ENCODE measurements at regions of chr6 and their contacts with region 1.

Region 1: GRCh38 chr6:126657561-126658175 is 317.8 kb downstream of the CENPW start:
- DNase-seq: no peak
- ATAC-seq: peak in 3 of 4 donors; percentile 49 to 72 (median 50)
- H3K4me3 ChIP-seq: no peak overlapping the region
- H3K27ac ChIP-seq: no peak overlapping the region
- H3K4me1 ChIP-seq: no peaks in the 10 kb centered on the region
- H3K27me3 ChIP-seq: no peaks in the 10 kb centered on the region
- CTCF ChIP-seq: peak in 1 of 4 donors; percentile 18

Region 2: DNA sequence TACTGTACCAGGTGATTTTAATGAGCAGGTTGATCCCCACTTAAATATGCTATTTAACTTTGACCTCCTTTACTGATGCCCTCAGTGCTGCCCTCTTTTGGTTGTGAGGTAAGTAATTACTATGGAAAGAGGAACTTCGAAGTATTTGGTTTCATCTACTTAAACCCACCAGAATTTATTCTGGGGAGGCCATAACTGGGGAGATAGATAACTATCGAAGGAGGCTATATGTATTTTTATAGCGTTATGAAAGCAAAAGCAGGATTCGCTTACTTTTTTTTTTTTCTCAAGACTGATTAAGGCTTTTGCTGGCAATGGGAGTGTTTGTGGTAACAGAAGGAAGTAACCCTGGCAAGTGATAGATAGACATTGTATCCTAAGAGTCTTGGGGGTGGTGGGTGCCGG is 486.7 kb before region 1 on chr6:
- intact Hi-C with region 1: loop called in 1 of 3 experiments (anchors 10 kb)
- DNase-seq: peak in 1 of 6 donors; percentile 12
- ATAC-seq: peak in 3 of 4 donors; percentile 46 to 61 (median 59)
- H3K4me3 ChIP-seq: no peak overlapping the region
- H3K27ac ChIP-seq: no peak overlapping the region
- H3K4me1 ChIP-seq: no peaks in the 10 kb centered on the region
- H3K27me3 ChIP-seq: no peaks in the 10 kb centered on the region
- CTCF ChIP-seq: peak in 2 of 4 donors; percentile 18 to 22

Region 3: DNA sequence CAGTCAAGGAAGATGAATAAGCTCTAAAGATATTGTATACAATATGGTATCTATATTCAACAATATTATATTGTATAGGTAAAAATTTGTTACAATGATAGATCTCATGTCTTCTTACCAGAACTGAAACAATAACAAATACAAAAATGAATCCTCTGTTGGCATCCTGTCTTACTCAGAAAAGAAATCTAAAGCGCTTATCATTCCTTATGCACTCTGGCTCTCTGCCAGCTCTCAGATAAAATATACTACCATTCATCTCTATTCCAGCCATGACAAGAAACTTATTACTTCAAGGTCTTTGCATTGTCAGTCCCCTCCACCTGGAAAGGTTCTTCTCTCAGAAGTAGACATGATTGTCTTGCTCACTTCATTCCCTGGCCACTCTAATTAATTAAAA is 1104.6 kb after region 1 on chr6:
- intact Hi-C with region 1: no loop called
- DNase-seq: no peak
- ATAC-seq: no peak
- H3K4me3 ChIP-seq: no peak overlapping the region
- H3K27ac ChIP-seq: no peak overlapping the region
- H3K4me1 ChIP-seq: no peaks in the 10 kb centered on the region
- H3K27me3 ChIP-seq: no peaks in the 10 kb centered on the region
- CTCF ChIP-seq: no peak

Measured in pancreas (tissue), 10 donors.